ENCODE measurements at regions of chr4 and their contacts with region 1.

Region 1: GRCh38 chr4:7802093-7802726 is 137.5 kb downstream of the AFAP1 start:
- DNase-seq: peak; percentile 61 to 85 (median 74)
- ATAC-seq: peak; percentile 97
- H3K4me3 ChIP-seq: no peak overlapping the region
- H3K4me3 Mint-ChIP-seq: no peak overlapping the region
- H3K27ac ChIP-seq: no peak overlapping the region
- H3K27ac Mint-ChIP-seq: no peak overlapping the region
- H3K4me1 ChIP-seq: peaks cover 7% of the 10 kb centered on the region
- H3K4me1 Mint-ChIP-seq: peaks cover 13% of the 10 kb centered on the region
- H3K27me3 ChIP-seq: no peaks in the 10 kb centered on the region
- H3K27me3 Mint-ChIP-seq: no peaks in the 10 kb centered on the region
- CTCF ChIP-seq: peak; percentile 82

Region 2: DNA sequence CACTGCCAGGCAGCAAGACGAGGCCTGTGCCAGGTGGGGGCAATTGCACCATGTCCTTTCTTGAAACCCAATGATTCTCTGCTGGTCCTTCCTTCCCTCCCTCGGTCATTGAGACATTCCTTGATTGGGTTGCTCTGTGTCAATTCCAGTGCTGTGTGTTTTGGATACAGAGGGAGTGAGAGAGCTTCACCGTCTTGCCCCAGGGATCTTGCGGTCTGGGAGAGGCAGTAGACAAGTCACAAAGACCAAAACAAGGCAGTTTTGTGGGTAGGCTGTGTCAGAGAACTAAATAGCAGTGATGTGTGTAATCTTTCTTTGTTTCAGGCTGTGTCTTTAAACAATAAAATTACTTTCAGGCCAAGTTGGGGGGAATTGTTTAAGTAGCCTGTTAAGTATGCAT is 797.9 kb before region 1 on chr4:
- CTCF ChIA-PET with region 1: no interaction called
- POLR2A ChIA-PET with region 1: no interaction called
- intact Hi-C with region 1: no loop called
- DNase-seq: no peak
- ATAC-seq: no peak
- H3K4me3 ChIP-seq: no peak overlapping the region
- H3K4me3 Mint-ChIP-seq: no peak overlapping the region
- H3K27ac ChIP-seq: no peak overlapping the region
- H3K27ac Mint-ChIP-seq: no peak overlapping the region
- H3K4me1 ChIP-seq: peaks cover 7% of the 10 kb centered on the region
- H3K4me1 Mint-ChIP-seq: peaks cover 2% of the 10 kb centered on the region
- H3K27me3 ChIP-seq: no peaks in the 10 kb centered on the region
- H3K27me3 Mint-ChIP-seq: no peaks in the 10 kb centered on the region
- CTCF ChIP-seq: no peak

Region 3: DNA sequence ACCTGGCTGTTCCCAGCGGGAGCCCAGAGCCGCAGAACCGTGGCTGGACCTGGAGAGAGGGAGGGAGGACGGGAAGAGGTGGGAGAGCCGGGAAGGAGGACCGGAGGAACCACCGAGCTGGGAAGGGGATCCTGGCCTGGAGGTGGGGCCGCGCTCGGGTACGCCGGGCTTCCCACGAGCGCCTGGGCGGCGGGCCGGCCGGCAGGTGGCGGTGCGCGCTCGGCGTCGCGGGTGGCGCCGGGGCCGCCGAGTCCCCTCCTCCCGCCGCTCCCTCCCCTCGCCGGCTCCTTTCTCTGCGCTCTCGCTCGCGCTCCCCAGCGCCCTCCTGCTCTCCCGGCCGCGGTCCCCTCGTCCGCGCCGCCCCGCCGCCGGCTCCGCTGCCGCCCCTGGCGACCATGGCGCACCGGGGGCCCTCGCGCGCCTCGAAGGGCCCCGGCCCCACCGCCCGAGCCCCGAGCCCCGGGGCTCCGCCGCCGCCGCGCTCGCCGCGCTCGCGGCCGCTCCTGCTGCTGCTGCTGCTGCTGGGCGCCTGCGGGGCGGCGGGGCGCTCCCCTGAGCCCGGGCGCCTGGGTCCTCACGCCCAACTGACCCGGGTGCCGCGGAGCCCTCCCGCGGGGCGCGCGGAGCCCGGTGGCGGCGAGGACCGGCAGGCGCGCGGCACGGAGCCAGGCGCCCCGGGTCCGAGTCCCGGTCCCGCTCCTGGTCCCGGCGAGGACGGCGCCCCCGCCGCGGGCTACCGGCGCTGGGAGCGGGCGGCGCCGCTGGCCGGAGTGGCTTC is 609.8 kb before region 1 on chr4 and contains the start of gene SORCS2:
- CTCF ChIA-PET with region 1: no interaction called
- POLR2A ChIA-PET with region 1: no interaction called
- intact Hi-C with region 1: loop called (anchors 5 to 10 kb)
- DNase-seq: peak in 11 of 14 experiments; percentile 8 to 66 (median 34)
- ATAC-seq: peak; percentile 43
- H3K4me3 ChIP-seq: no peak within 1 kb of the TSS
- H3K4me3 Mint-ChIP-seq: peak within 1 kb of the TSS; percentile 62
- H3K27ac ChIP-seq: no peak within 1 kb of the TSS
- H3K27ac Mint-ChIP-seq: no peak within 1 kb of the TSS
- H3K4me1 ChIP-seq: peaks cover 8% of the 10 kb centered on the region
- H3K4me1 Mint-ChIP-seq: no peaks in the 10 kb centered on the region
- H3K27me3 ChIP-seq: peaks cover 32 to 62% of the 10 kb centered on the region in 2 experiments
- H3K27me3 Mint-ChIP-seq: peaks cover 78% of the 10 kb centered on the region
- CTCF ChIP-seq: no peak
- total RNA-seq, gene SORCS2: not detected

Region 4: GRCh38 chr4:7761720-7762119 is 40.5 kb before region 1 on chr4:
- CTCF ChIA-PET with region 1: interaction called, 13 read pairs
- POLR2A ChIA-PET with region 1: no interaction called
- intact Hi-C with region 1: loop called in 1 of 2 experiments (anchors 2 kb)
- DNase-seq: peak; percentile 25 to 74 (median 44)
- ATAC-seq: peak; percentile 40
- H3K4me3 ChIP-seq: no peak overlapping the region
- H3K4me3 Mint-ChIP-seq: peak overlapping the region; percentile 56
- H3K27ac ChIP-seq: peak overlapping the region in 1 of 2 donors; percentile 13
- H3K27ac Mint-ChIP-seq: peak overlapping the region; percentile 83
- H3K4me1 ChIP-seq: peaks cover 24% of the 10 kb centered on the region
- H3K4me1 Mint-ChIP-seq: peaks cover 32% of the 10 kb centered on the region
- H3K27me3 ChIP-seq: no peaks in the 10 kb centered on the region
- H3K27me3 Mint-ChIP-seq: no peaks in the 10 kb centered on the region
- CTCF ChIP-seq: peak; percentile 54

Region 5: DNA sequence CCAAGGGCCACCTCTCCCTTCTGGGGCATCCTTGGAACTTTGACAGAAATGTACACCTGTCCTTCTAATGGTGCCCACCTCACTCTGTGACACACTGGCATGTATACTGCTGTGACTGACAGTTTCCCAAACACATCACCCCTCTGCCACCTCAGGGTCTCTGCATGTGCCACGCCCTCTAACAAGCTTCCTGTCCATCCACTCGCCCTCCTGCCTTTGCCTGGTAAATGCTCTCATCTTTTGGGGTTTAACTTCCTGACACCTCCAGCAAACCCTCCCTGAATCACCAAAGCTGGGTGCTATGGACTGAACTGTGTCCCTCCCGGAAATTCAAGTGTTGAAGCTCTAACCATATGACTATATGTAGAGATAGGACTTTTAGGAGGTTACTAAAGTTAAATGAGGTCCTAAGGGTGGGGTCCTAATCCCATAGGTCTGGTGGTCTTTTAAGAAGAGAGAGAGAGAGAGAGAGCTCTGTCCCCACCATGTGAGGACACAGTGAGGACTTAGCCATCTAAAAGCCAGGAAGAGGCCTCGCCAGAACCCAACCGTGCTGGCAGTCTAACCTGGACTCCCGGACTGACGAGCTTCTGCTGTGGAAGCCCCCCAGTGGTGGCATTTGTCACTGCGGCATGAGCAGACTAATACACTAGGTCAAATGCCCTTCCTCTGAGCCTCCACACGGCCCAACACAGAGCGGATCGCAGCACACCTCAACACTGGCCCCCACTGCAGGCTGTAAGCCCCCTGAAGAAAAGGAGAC is 41.8 kb after region 1 on chr4:
- CTCF ChIA-PET with region 1: interaction called, 15 read pairs
- POLR2A ChIA-PET with region 1: no interaction called
- intact Hi-C with region 1: loop called in 1 of 2 experiments (anchors 1 kb)
- DNase-seq: peak; percentile 50 to 84 (median 66)
- ATAC-seq: peak; percentile 89
- H3K4me3 ChIP-seq: no peak overlapping the region
- H3K4me3 Mint-ChIP-seq: no peak overlapping the region
- H3K27ac ChIP-seq: no peak overlapping the region
- H3K27ac Mint-ChIP-seq: no peak overlapping the region
- H3K4me1 ChIP-seq: peaks cover 16% of the 10 kb centered on the region
- H3K4me1 Mint-ChIP-seq: peaks cover 31% of the 10 kb centered on the region
- H3K27me3 ChIP-seq: no peaks in the 10 kb centered on the region
- H3K27me3 Mint-ChIP-seq: no peaks in the 10 kb centered on the region
- CTCF ChIP-seq: peak; percentile 76

Region 6: GRCh38 chr4:7857238-7857701 is 55.1 kb after region 1 on chr4:
- CTCF ChIA-PET with region 1: interaction called, 8 read pairs
- POLR2A ChIA-PET with region 1: no interaction called
- intact Hi-C with region 1: loop called in 1 of 2 experiments (anchors 5 kb)
- DNase-seq: no peak
- ATAC-seq: no peak
- H3K4me3 ChIP-seq: no peak overlapping the region
- H3K4me3 Mint-ChIP-seq: no peak overlapping the region
- H3K27ac ChIP-seq: no peak overlapping the region
- H3K27ac Mint-ChIP-seq: peak overlapping the region; percentile 93
- H3K4me1 ChIP-seq: peaks cover 54% of the 10 kb centered on the region
- H3K4me1 Mint-ChIP-seq: peaks cover 61% of the 10 kb centered on the region
- H3K27me3 ChIP-seq: no peaks in the 10 kb centered on the region
- H3K27me3 Mint-ChIP-seq: no peaks in the 10 kb centered on the region
- CTCF ChIP-seq: no peak

Region 7: DNA sequence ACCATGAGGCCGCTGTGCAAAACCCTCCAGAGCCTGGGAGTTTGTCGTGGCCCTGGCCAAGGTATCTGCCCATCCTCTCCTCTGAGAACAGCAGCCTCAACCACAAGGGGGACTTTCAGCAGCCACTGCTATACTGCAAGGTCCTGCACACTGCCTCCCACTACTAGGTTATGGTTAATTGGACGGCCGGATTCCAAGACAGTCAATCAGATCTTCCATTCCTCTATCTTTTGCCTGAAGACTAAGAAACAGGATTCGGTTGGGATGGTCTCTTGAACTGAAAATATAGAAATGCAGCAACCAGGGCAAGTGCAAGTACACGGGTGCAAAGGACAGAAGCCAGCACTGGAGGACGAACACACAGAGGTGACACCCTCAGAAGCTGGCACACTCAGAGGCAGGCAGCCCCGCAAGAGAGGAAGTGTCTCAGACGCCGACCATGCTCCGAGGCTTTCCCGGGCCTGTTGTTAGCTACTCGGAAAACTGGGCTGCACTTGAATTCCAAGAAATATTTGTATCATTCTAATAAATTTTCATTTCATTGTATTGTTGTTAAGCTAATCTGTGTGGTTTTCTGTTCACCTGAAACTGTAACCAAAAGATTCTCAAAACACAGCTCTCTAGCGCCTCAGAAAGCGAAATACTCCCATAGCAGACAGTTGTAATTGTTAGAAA is 74.1 kb after region 1 on chr4:
- CTCF ChIA-PET with region 1: interaction called, 12 read pairs
- POLR2A ChIA-PET with region 1: no interaction called
- intact Hi-C with region 1: loop called in 1 of 2 experiments (anchors 5 kb)
- DNase-seq: peak in 12 of 14 experiments; percentile 23 to 66 (median 44)
- ATAC-seq: peak; percentile 77
- H3K4me3 ChIP-seq: peak overlapping the region; percentile 28
- H3K4me3 Mint-ChIP-seq: peak overlapping the region; percentile 62
- H3K27ac ChIP-seq: peak overlapping the region; percentile 17 to 60
- H3K27ac Mint-ChIP-seq: peak overlapping the region; percentile 66
- H3K4me1 ChIP-seq: peaks cover 28% of the 10 kb centered on the region
- H3K4me1 Mint-ChIP-seq: peaks cover 64% of the 10 kb centered on the region
- H3K27me3 ChIP-seq: no peaks in the 10 kb centered on the region
- H3K27me3 Mint-ChIP-seq: no peaks in the 10 kb centered on the region
- CTCF ChIP-seq: peak; percentile 16

Region 8: GRCh38 chr4:7987148-7987989 is 185.2 kb after region 1 on chr4:
- CTCF ChIA-PET with region 1: interaction called, 13 read pairs
- POLR2A ChIA-PET with region 1: no interaction called
- intact Hi-C with region 1: loop called in 1 of 2 experiments (anchors 1 kb)
- DNase-seq: peak; percentile 53 to 87 (median 72)
- ATAC-seq: peak; percentile 85
- H3K4me3 ChIP-seq: no peak overlapping the region
- H3K4me3 Mint-ChIP-seq: no peak overlapping the region
- H3K27ac ChIP-seq: no peak overlapping the region
- H3K27ac Mint-ChIP-seq: no peak overlapping the region
- H3K4me1 ChIP-seq: peaks cover 9% of the 10 kb centered on the region
- H3K4me1 Mint-ChIP-seq: peaks cover 7% of the 10 kb centered on the region
- H3K27me3 ChIP-seq: no peaks in the 10 kb centered on the region
- H3K27me3 Mint-ChIP-seq: no peaks in the 10 kb centered on the region
- CTCF ChIP-seq: peak; percentile 79